Prostate gland (tissue), 2 donors: ENCODE measurements at regions of chr16 and their contacts with region 1.

Region 1: DNA sequence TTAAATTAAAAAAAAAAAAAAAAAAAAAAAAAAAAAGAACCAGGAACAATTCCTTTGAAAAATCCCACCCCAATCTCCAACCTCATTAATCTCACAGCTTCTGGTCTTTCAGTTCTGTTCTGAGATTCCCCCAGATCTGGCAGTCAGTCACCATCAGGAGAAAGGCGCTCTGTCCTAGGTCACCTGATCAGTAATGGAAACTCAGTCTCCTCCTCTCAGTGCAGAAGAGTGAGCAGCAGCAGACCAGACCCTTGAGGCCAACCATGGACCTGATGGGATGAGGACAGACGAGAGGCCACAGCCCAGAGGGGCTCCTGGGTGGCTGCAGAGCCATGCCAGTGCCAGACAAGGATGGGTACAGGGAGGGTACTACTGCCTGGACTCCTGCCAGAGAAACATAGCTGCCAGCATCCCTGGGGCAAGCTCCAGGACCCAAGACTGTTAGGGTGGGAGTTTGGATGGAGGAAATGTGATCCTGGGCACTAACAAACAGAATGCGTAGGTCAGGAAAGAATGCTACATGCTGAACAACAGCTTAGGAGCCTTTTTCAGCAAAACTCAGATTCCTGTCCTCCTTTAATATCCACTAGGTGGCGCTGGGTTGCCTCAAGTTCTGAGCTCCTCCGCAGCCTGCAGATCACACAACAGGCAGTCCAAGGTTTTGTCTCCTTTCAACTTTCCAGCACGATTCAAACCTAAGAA is 28.7 kb downstream of the MPG start:
- DNase-seq: peak; percentile 61
- H3K4me3 ChIP-seq: no peak overlapping the region
- H3K27ac ChIP-seq: no peak overlapping the region
- H3K4me1 ChIP-seq: no peaks in the 10 kb centered on the region
- H3K27me3 ChIP-seq: no peaks in the 10 kb centered on the region
- CTCF ChIP-seq: peak; percentile 68 to 81 (median 75)
- POLR2A ChIP-seq: no peak

Region 2: GRCh38 chr16:177394-177822 is 70.6 kb after region 1 on chr16:
- intact Hi-C with region 1: loop called (anchors 5 kb)
- DNase-seq: no peak
- H3K4me3 ChIP-seq: no peak overlapping the region
- H3K27ac ChIP-seq: no peak overlapping the region
- H3K4me1 ChIP-seq: peaks cover 10% of the 10 kb centered on the region
- H3K27me3 ChIP-seq: peaks cover 11% of the 10 kb centered on the region
- CTCF ChIP-seq: no peak
- POLR2A ChIP-seq: no peak

Region 3: GRCh38 chr16:303760-304505 is 197.2 kb after region 1 on chr16:
- intact Hi-C with region 1: no loop called
- DNase-seq: no peak
- H3K4me3 ChIP-seq: no peak overlapping the region
- H3K27ac ChIP-seq: no peak overlapping the region
- H3K4me1 ChIP-seq: no peaks in the 10 kb centered on the region
- H3K27me3 ChIP-seq: no peaks in the 10 kb centered on the region
- CTCF ChIP-seq: no peak
- POLR2A ChIP-seq: no peak

Region 4: DNA sequence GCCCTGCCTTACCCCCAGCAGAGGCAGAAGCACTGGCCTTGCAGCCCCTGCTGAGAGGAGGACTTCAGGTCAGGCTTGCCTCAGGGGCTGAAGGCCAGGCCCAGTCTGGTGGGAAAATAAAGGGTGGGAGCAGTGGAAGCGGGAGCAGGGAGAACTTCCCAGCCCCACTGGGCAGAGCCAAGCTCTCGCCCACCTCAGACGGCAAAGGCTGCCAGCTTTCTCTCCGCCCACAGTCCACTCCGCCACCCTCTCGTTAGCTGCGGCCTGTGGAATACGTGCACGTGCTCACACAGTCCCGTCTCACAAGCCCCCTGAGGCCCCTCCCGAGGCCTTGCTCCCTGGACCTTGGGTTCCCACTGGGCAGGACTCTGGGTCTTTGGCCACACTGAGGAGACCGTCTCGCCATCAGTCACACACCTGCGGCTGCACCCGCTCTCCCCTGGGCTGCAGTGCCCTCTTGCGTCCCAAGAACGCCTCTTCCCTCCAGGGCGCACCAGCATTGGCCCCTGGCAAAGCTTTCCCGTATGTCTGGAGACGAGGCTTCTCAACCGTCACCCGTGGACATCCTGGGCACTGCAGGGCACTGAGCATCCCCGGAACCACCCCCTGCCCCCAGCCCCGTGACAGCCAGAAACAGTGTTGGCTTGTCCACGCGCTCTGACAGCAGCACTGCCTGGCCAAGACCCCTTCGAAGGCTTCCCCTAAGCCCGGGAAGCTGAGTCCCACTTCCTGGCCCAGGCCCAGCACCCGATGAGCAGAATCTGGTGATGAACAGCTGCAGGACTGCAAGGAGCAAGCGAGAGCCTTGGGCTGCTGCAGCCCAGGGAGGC is 255.3 kb after region 1 on chr16:
- intact Hi-C with region 1: loop called (anchors 5 kb)
- DNase-seq: peak; percentile 80
- H3K4me3 ChIP-seq: no peak overlapping the region
- H3K27ac ChIP-seq: no peak overlapping the region
- H3K4me1 ChIP-seq: no peaks in the 10 kb centered on the region
- H3K27me3 ChIP-seq: no peaks in the 10 kb centered on the region
- CTCF ChIP-seq: peak; percentile 51 to 91 (median 78)
- POLR2A ChIP-seq: no peak